Activated naive CD4-positive, alpha-beta T cell treated with anti-CD3 and anti-CD28 coated beads for 36 hours (primary cell): ENCODE measurements at regions of chr3 and their contacts with region 1.

Region 1: GRCh38 chr3:4845882-4846281 is 133.4 kb upstream of the BHLHE40 start:
- DNase-seq: no peak
- H3K4me3 Mint-ChIP-seq: no peak overlapping the region
- H3K27ac Mint-ChIP-seq: peak overlapping the region; percentile 93
- H3K4me1 Mint-ChIP-seq: peaks cover 94% of the 10 kb centered on the region
- H3K27me3 Mint-ChIP-seq: no peaks in the 10 kb centered on the region

Region 2: GRCh38 chr3:4786431-4786830 is 59.5 kb before region 1 on chr3:
- CTCF ChIA-PET with region 1: no interaction called
- intact Hi-C with region 1: no loop called
- DNase-seq: no peak
- H3K4me3 Mint-ChIP-seq: no peak overlapping the region
- H3K27ac Mint-ChIP-seq: no peak overlapping the region
- H3K4me1 Mint-ChIP-seq: peaks cover 2% of the 10 kb centered on the region
- H3K27me3 Mint-ChIP-seq: no peaks in the 10 kb centered on the region

Region 3: GRCh38 chr3:4834403-4834866 is 11.4 kb before region 1 on chr3:
- CTCF ChIA-PET with region 1: interaction called, 17 read pairs
- intact Hi-C with region 1: loop called (anchors 1 kb)
- DNase-seq: peak; percentile 84
- H3K4me3 Mint-ChIP-seq: peak overlapping the region; percentile 13
- H3K27ac Mint-ChIP-seq: peak overlapping the region; percentile 93
- H3K4me1 Mint-ChIP-seq: peaks cover 85% of the 10 kb centered on the region
- H3K27me3 Mint-ChIP-seq: no peaks in the 10 kb centered on the region

Region 4: GRCh38 chr3:5260992-5261501 is 415.2 kb after region 1 on chr3:
- CTCF ChIA-PET with region 1: no interaction called
- intact Hi-C with region 1: no loop called
- DNase-seq: no peak
- H3K4me3 Mint-ChIP-seq: no peak overlapping the region
- H3K27ac Mint-ChIP-seq: no peak overlapping the region
- H3K4me1 Mint-ChIP-seq: peaks cover 12% of the 10 kb centered on the region
- H3K27me3 Mint-ChIP-seq: no peaks in the 10 kb centered on the region

Region 5: GRCh38 chr3:5717254-5717653 is 871.4 kb after region 1 on chr3:
- CTCF ChIA-PET with region 1: no interaction called
- intact Hi-C with region 1: no loop called
- DNase-seq: no peak
- H3K4me3 Mint-ChIP-seq: no peak overlapping the region
- H3K27ac Mint-ChIP-seq: no peak overlapping the region
- H3K4me1 Mint-ChIP-seq: no peaks in the 10 kb centered on the region
- H3K27me3 Mint-ChIP-seq: no peaks in the 10 kb centered on the region